PC-3 (cell line): ENCODE measurements at regions of chr11 and their contacts with region 1.

Region 1: DNA sequence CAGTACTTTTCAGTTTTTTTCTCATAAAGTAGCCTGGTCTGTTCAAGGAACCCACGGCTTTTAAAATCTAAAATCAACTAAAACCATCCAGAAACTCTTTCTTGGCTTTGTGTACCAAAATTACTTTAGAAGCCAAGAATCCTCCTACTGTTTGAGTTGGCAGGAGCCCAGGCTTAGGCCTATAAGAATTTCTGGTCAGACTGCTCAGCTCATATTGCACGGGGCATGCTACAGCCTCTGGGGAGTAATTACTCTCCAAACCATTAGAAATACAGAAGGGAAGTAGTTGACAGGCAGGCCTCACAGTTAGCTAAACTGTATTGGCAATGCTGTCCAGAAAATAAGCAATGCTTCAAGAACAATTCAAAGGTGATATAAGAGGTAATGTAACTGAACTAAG is 1862.9 kb upstream of the RAG2 start:
- DNase-seq: peak; percentile 88
- ATAC-seq: peak; percentile 90
- H3K4me3 ChIP-seq: peak overlapping the region; percentile 48
- H3K27ac ChIP-seq: peak overlapping the region; percentile 89
- H3K4me1 ChIP-seq: peaks cover 27% of the 10 kb centered on the region
- H3K27me3 ChIP-seq: no peaks in the 10 kb centered on the region
- CTCF ChIP-seq: no peak

Region 2: DNA sequence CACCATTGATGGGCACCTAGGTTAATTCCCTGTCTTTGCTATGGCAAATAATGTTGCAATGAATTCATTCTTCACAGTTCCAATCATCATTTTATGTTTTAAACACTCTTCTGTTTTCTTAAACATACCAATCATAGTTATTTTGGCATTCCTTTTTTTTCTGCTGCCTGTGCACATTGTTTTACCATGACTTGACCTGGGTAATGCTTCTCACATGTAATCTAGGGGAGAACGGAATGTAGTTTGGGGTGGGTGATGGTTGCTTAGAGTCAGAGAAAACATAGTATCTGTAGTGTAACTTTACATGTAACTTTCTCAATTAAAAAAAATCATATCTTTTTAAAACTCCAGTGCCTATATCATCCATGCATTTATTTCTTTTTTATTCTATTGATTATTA is 82.4 kb after region 1 on chr11:
- CTCF ChIA-PET with region 1: no interaction called
- POLR2A ChIA-PET with region 1: no interaction called
- intact Hi-C with region 1: loop called (anchors 1 kb)
- DNase-seq: peak; percentile 6
- ATAC-seq: no peak
- H3K4me3 ChIP-seq: no peak overlapping the region
- H3K27ac ChIP-seq: no peak overlapping the region
- H3K4me1 ChIP-seq: peaks cover 12% of the 10 kb centered on the region
- H3K27me3 ChIP-seq: no peaks in the 10 kb centered on the region
- CTCF ChIP-seq: no peak